Heart right ventricle (tissue), 16 donors: ENCODE measurements at regions of chr5 and their contacts with region 1.

Region 1: GRCh38 chr5:41457094-41457493 is 53.3 kb downstream of the PLCXD3 start:
- DNase-seq: peak in 1 of 2 donors; percentile 46
- ATAC-seq: peak; percentile 74 to 96 (median 92)
- H3K4me3 ChIP-seq: no peak overlapping the region
- H3K27ac ChIP-seq: peak overlapping the region; percentile 12 to 79 (median 61)
- H3K4me1 ChIP-seq: peaks cover 0 to 55% (median 7%) of the 10 kb centered on the region in 9 donors
- H3K27me3 ChIP-seq: no peaks in the 10 kb centered on the region
- CTCF ChIP-seq: no peak

Region 2: GRCh38 chr5:40916226-40916625 is 540.9 kb before region 1 on chr5:
- intact Hi-C with region 1: no loop called
- DNase-seq: no peak
- ATAC-seq: peak in 2 of 8 donors; percentile 14 to 33
- H3K4me3 ChIP-seq: peak overlapping the region in 1 of 10 donors; percentile 40
- H3K27ac ChIP-seq: peak overlapping the region in 3 of 10 donors; percentile 46 to 65 (median 64)
- H3K4me1 ChIP-seq: peaks cover 0 to 36% (median 8%) of the 10 kb centered on the region in 9 donors
- H3K27me3 ChIP-seq: no peaks in the 10 kb centered on the region
- CTCF ChIP-seq: no peak

Region 3: GRCh38 chr5:41151562-41151961 is 305.5 kb before region 1 on chr5:
- intact Hi-C with region 1: no loop called
- DNase-seq: no peak
- ATAC-seq: peak in 1 of 8 donors; percentile 50
- H3K4me3 ChIP-seq: no peak overlapping the region
- H3K27ac ChIP-seq: no peak overlapping the region
- H3K4me1 ChIP-seq: no peaks in the 10 kb centered on the region
- H3K27me3 ChIP-seq: no peaks in the 10 kb centered on the region
- CTCF ChIP-seq: no peak

Region 4: DNA sequence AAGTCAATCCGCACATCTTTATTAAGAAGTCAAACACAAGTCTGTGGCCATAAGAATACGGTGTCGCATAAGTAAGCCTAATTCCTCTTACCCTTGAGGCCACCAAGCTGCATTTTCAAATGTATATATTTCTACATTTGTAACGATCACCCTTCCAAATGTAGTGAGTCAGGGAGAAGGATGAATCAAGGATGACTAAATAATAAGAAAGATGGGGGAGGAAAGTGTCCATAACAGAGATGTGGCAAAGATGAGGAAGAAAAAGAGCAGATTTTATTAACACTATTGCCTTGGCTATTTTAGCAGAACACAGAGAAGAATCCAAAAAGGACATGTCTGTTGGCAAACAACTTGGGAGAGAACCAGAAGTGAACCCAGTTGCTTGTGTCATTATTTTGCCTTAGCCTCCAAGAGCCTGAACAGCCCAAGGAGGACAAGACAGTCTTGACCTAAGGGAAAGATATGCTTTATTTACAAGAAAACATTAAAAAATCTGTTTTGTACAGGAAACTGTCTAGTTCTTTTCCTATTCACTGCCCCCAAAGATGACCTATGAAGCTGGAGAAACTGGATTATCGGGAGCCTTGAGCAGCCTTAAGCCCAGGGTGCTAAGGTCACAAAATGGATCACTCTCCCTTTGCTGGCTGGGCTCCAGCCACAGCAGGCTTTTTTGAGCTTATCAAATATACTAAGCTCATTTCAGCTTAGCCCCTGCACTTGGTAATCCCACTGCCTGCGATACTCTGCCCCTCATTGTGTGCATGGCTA is 48.2 kb before region 1 on chr5:
- intact Hi-C with region 1: loop called in 1 of 10 experiments (anchors 5 kb)
- DNase-seq: peak in 1 of 2 donors; percentile 21
- ATAC-seq: peak in 1 of 8 donors; percentile 39
- H3K4me3 ChIP-seq: no peak overlapping the region
- H3K27ac ChIP-seq: peak overlapping the region in 8 of 10 donors; percentile 15 to 62 (median 45)
- H3K4me1 ChIP-seq: peaks cover 0 to 50% (median 28%) of the 10 kb centered on the region in 9 donors
- H3K27me3 ChIP-seq: no peaks in the 10 kb centered on the region
- CTCF ChIP-seq: no peak

Region 5: DNA sequence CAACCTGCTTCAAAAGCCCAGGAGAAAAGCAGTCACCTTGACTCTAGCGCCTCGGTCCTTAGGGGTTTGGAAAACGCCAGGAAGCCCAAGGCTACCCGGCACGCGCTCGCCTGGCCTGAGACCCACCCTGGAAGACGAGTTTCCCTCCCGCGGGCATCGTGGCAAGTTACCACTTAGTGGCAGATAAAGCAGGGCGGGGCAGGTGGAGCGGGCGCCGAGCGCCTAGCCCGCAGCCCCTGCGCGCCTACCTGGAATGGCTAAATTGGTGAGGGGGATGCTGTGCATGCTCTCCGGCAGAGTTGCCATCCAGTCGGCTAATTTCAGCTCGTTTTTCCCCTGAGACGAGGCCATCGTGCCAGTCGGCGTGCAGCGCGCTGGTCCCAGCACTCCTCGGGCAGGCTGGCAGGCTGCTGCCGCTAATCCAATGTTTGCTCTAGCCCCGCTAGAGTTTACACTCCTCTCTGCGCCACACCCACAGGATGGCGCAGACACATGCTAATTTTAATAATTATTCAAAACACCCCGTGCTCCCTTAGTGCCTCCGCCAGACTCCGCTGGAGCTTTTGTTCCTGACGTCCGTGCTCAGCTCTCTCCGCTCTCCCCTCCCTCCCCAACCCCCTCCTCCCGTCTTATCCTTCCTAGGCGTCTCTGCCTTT is 53.2 kb after region 1 on chr5 and contains the start of gene PLCXD3:
- intact Hi-C with region 1: loop called in 2 of 10 experiments (anchors 10 kb)
- DNase-seq: peak; percentile 45
- ATAC-seq: peak; percentile 87 to 96 (median 94)
- H3K4me3 ChIP-seq: peak within 1 kb of the TSS; percentile 62 to 78 (median 72)
- H3K27ac ChIP-seq: peak within 1 kb of the TSS; percentile 62 to 88 (median 80)
- H3K4me1 ChIP-seq: peaks cover 3 to 32% (median 15%) of the 10 kb centered on the region in 9 donors
- H3K27me3 ChIP-seq: peaks cover 0 to 16% (median 0%) of the 10 kb centered on the region in 7 donors
- CTCF ChIP-seq: no peak
- total RNA-seq, gene PLCXD3: 36.2 to 104 (median 55.5) TPM

Region 6: GRCh38 chr5:43190755-43191603 is 1733.9 kb after region 1 on chr5:
- intact Hi-C with region 1: no loop called
- DNase-seq: no peak
- ATAC-seq: no peak
- H3K4me3 ChIP-seq: peak overlapping the region in 6 of 10 donors; percentile 49 to 75 (median 63)
- H3K27ac ChIP-seq: no peak overlapping the region
- H3K4me1 ChIP-seq: peaks cover 2 to 33% (median 25%) of the 10 kb centered on the region in 9 donors
- H3K27me3 ChIP-seq: peaks cover 0 to 31% (median 0%) of the 10 kb centered on the region in 7 donors
- CTCF ChIP-seq: no peak